ENCODE measurements at regions of chr15 and their contacts with region 1.

Region 1: DNA sequence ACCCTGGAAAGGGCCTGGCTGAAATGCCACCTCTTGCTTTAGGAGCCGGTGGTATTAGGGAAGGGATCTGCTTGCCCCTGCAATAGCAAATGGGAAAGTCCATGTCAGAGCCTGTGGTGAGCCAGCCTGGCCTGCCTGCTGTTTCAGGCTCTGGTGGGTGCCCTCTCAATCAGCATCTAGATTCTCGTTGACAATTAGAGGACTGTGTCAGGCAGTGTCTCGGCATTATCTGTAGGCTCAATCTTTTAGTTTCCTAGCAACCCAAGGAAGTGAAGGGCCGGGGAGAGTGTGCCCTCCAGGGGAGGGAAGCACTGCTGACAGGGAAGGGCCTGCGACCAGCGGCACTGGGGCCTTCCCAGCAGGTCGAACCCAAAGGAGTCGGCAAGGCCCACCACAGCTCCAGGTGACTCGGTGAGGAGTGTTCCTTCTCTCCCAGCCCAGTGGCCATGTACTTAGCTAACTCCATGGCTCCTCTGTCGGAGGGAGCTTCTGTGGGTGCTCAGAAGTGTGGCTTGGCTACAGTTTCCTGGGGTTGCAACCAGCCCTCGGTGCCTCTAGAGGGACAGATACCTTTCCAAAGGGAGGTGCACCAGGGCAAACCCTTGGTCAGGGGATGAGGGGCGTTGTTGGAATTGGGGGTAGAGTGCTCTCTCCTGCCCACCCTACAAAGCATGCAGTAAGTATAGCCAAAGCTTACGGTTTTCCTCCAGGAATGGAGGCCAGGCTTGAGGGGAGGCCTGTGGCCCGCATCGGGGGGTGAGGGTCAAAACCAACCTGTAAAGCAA is 41.9 kb downstream of the TLE3 start:
- DNase-seq: peak in 1 of 14 experiments; percentile 2
- ATAC-seq: no peak
- H3K4me3 ChIP-seq: no peak overlapping the region
- H3K4me3 Mint-ChIP-seq: no peak overlapping the region
- H3K27ac ChIP-seq: no peak overlapping the region
- H3K27ac Mint-ChIP-seq: no peak overlapping the region
- H3K4me1 ChIP-seq: no peaks in the 10 kb centered on the region
- H3K4me1 Mint-ChIP-seq: no peaks in the 10 kb centered on the region
- H3K27me3 ChIP-seq: no peaks in the 10 kb centered on the region
- H3K27me3 Mint-ChIP-seq: no peaks in the 10 kb centered on the region
- CTCF ChIP-seq: no peak

Region 2: GRCh38 chr15:70200511-70201424 is 145.0 kb after region 1 on chr15:
- CTCF ChIA-PET with region 1: no interaction called
- POLR2A ChIA-PET with region 1: no interaction called
- intact Hi-C with region 1: loop called in 1 of 2 experiments (anchors 10 kb)
- DNase-seq: no peak
- ATAC-seq: no peak
- H3K4me3 ChIP-seq: no peak overlapping the region
- H3K4me3 Mint-ChIP-seq: no peak overlapping the region
- H3K27ac ChIP-seq: no peak overlapping the region
- H3K27ac Mint-ChIP-seq: no peak overlapping the region
- H3K4me1 ChIP-seq: peaks cover 13% of the 10 kb centered on the region
- H3K4me1 Mint-ChIP-seq: peaks cover 7% of the 10 kb centered on the region
- H3K27me3 ChIP-seq: no peaks in the 10 kb centered on the region
- H3K27me3 Mint-ChIP-seq: no peaks in the 10 kb centered on the region
- CTCF ChIP-seq: no peak

Measured in CD4-positive, alpha-beta T cell (primary cell).